ENCODE measurements at regions of chr9 and their contacts with region 1.

Region 1: GRCh38 chr9:73183917-73184861 is 32.5 kb downstream of the ANXA1 start:
- DNase-seq: peak in 1 of 4 donors; percentile 48
- ATAC-seq: no peak
- H3K4me3 ChIP-seq: no peak overlapping the region
- H3K27ac ChIP-seq: no peak overlapping the region
- H3K4me1 ChIP-seq: no peaks in the 10 kb centered on the region
- H3K27me3 ChIP-seq: no peaks in the 10 kb centered on the region
- CTCF ChIP-seq: peak; percentile 54 to 55

Region 2: GRCh38 chr9:72882117-72882775 is 301.9 kb before region 1 on chr9:
- intact Hi-C with region 1: no loop called
- DNase-seq: no peak
- ATAC-seq: no peak
- H3K4me3 ChIP-seq: no peak overlapping the region
- H3K27ac ChIP-seq: no peak overlapping the region
- H3K4me1 ChIP-seq: no peaks in the 10 kb centered on the region
- H3K27me3 ChIP-seq: no peaks in the 10 kb centered on the region
- CTCF ChIP-seq: no peak

Region 3: DNA sequence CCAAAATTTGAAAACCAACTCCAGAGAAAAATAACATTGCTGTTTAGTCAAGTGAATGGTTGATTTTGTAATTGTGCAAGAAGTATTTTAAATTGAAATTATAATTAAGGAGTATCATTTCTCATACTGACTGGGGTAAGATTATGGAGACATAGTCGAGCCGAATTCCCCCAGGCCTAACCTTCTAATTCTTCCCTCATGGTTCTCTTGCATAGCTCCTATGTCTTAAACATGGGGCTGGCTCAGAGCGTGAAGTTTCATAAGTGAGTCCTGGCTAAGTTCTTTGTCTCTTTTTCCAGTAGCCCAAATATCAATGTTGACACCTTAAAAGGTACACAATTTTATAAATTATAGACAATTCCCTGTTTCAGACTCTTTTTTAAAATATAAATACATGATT is 79.3 kb before region 1 on chr9:
- intact Hi-C with region 1: loop called in 1 of 2 experiments (anchors 5 kb)
- DNase-seq: no peak
- ATAC-seq: no peak
- H3K4me3 ChIP-seq: no peak overlapping the region
- H3K27ac ChIP-seq: no peak overlapping the region
- H3K4me1 ChIP-seq: no peaks in the 10 kb centered on the region
- H3K27me3 ChIP-seq: no peaks in the 10 kb centered on the region
- CTCF ChIP-seq: no peak

Region 4: GRCh38 chr9:73116031-73116430 is 68.2 kb before region 1 on chr9:
- intact Hi-C with region 1: no loop called
- DNase-seq: no peak
- ATAC-seq: peak; percentile 77
- H3K4me3 ChIP-seq: no peak overlapping the region
- H3K27ac ChIP-seq: no peak overlapping the region
- H3K4me1 ChIP-seq: no peaks in the 10 kb centered on the region
- H3K27me3 ChIP-seq: no peaks in the 10 kb centered on the region
- CTCF ChIP-seq: no peak